CD8-positive, alpha-beta T cell (primary cell): ENCODE measurements at regions of chr7 and their contacts with region 1.

Region 1: GRCh38 chr7:105238198-105238765 is 150.4 kb downstream of the SRPK2 start:
- DNase-seq: no peak
- ATAC-seq: no peak
- H3K4me3 ChIP-seq: no peak overlapping the region
- H3K4me3 Mint-ChIP-seq: no peak overlapping the region
- H3K27ac ChIP-seq: no peak overlapping the region
- H3K27ac Mint-ChIP-seq: no peak overlapping the region
- H3K4me1 ChIP-seq: peaks cover 5% of the 10 kb centered on the region
- H3K4me1 Mint-ChIP-seq: peaks cover 72% of the 10 kb centered on the region
- H3K27me3 ChIP-seq: no peaks in the 10 kb centered on the region
- H3K27me3 Mint-ChIP-seq: no peaks in the 10 kb centered on the region
- CTCF ChIP-seq: no peak

Region 2: DNA sequence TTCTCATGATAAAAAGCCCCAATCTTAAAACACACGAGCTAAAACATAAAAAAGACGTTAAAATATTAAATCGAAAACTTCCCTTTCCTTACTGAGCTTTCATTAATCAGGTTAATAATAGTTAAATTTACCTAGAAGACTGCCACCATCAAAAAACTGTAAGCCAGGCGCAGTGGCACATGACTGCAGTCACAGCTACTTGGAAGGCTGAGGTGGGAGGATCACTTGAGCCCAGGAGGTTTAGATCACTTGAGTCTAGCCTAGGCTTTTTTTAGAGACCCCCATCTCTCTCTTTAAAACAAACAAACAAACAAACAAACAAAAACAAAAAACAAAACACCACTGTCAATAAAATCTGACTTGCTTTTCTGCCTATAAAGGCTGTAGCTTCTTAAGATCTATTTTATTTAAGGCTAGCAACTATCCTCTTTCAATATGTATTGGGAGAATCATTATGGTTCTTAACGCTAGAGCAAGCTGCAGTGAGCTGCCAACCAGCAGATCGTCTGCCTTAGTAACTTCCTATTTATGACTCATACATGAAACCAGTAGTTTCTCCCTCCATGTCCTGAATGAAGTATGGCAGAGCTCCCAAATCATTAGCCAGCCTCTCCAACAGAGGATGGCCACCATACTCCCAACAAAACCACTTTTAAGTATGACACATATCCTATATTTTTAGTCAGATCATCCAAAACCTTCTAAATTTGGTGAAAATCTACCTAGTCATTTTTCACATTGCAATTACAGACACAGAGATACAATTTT is 13.2 kb before region 1 on chr7:
- CTCF ChIA-PET with region 1: no interaction called
- POLR2A ChIA-PET with region 1: no interaction called
- intact Hi-C with region 1: loop called in 1 of 2 experiments (anchors 2 kb)
- DNase-seq: peak in 2 of 9 experiments; percentile 15 to 32
- ATAC-seq: peak; percentile 46
- H3K4me3 ChIP-seq: no peak overlapping the region
- H3K4me3 Mint-ChIP-seq: no peak overlapping the region
- H3K27ac ChIP-seq: no peak overlapping the region
- H3K27ac Mint-ChIP-seq: no peak overlapping the region
- H3K4me1 ChIP-seq: peaks cover 8% of the 10 kb centered on the region
- H3K4me1 Mint-ChIP-seq: peaks cover 34% of the 10 kb centered on the region
- H3K27me3 ChIP-seq: no peaks in the 10 kb centered on the region
- H3K27me3 Mint-ChIP-seq: no peaks in the 10 kb centered on the region
- CTCF ChIP-seq: no peak

Region 3: GRCh38 chr7:105250211-105250610 is 11.9 kb after region 1 on chr7:
- CTCF ChIA-PET with region 1: no interaction called
- POLR2A ChIA-PET with region 1: no interaction called
- intact Hi-C with region 1: loop called in 1 of 2 experiments (anchors 2 kb)
- DNase-seq: no peak
- ATAC-seq: no peak
- H3K4me3 ChIP-seq: no peak overlapping the region
- H3K4me3 Mint-ChIP-seq: no peak overlapping the region
- H3K27ac ChIP-seq: no peak overlapping the region
- H3K27ac Mint-ChIP-seq: no peak overlapping the region
- H3K4me1 ChIP-seq: no peaks in the 10 kb centered on the region
- H3K4me1 Mint-ChIP-seq: peaks cover 38% of the 10 kb centered on the region
- H3K27me3 ChIP-seq: no peaks in the 10 kb centered on the region
- H3K27me3 Mint-ChIP-seq: no peaks in the 10 kb centered on the region
- CTCF ChIP-seq: no peak